ENCODE measurements at regions of chr5 and their contacts with region 1.

Region 1: GRCh38 chr5:40904205-40904993 is 4.9 kb upstream of the C7 start:
- DNase-seq: peak in 1 of 2 donors; percentile 63
- ATAC-seq: peak; percentile 90
- H3K4me3 ChIP-seq: no peak overlapping the region
- H3K27ac ChIP-seq: no peak overlapping the region
- H3K4me1 ChIP-seq: no peaks in the 10 kb centered on the region
- H3K27me3 ChIP-seq: no peaks in the 10 kb centered on the region

Region 2: DNA sequence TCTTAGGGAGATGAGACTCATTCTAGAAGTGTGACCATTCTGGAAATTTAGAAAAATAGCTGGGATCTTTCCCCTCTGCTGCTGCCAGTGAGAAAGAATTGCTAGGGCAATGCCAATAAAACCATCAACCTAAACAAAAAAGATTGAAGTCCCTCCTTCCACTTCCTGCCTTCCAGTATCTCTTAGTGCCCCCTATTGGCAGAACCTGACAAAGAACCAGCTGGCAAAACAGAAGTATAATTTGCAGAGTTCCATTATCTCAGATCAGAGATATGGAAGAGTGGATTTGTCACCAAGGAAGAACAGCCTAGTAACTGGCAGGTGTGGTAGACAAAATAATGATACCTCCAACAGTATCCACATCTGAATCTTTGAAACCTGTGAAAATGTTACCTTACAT is 619.8 kb after region 1 on chr5:
- intact Hi-C with region 1: loop called in 1 of 2 experiments (anchors 10 kb)
- DNase-seq: no peak
- ATAC-seq: no peak
- H3K4me3 ChIP-seq: no peak overlapping the region
- H3K27ac ChIP-seq: no peak overlapping the region
- H3K4me1 ChIP-seq: peaks cover 0 to 2% of the 10 kb centered on the region in 2 donors
- H3K27me3 ChIP-seq: no peaks in the 10 kb centered on the region

Region 3: DNA sequence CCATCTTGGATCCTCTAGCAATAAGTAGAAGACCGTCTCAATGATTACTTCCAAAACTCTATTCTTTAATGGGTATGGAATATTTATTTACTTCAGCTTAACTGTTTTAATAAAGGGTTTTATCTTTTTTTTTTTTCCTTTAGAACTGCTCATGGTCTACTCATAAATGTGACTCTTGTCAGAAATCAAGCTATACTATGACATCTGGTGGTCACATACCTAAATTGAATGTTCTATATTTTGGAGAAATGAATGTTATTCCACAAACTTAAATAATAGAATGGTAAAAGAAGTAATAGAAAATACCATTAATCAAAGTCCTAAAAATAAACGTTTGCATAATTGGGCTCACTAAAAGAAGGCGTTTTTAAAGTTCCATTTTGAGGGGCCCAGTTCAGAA is 737.2 kb after region 1 on chr5:
- intact Hi-C with region 1: loop called in 1 of 2 experiments (anchors 10 kb)
- DNase-seq: no peak
- ATAC-seq: no peak
- H3K4me3 ChIP-seq: no peak overlapping the region
- H3K27ac ChIP-seq: no peak overlapping the region
- H3K4me1 ChIP-seq: peaks cover 0 to 2% of the 10 kb centered on the region in 2 donors
- H3K27me3 ChIP-seq: no peaks in the 10 kb centered on the region

Region 4: DNA sequence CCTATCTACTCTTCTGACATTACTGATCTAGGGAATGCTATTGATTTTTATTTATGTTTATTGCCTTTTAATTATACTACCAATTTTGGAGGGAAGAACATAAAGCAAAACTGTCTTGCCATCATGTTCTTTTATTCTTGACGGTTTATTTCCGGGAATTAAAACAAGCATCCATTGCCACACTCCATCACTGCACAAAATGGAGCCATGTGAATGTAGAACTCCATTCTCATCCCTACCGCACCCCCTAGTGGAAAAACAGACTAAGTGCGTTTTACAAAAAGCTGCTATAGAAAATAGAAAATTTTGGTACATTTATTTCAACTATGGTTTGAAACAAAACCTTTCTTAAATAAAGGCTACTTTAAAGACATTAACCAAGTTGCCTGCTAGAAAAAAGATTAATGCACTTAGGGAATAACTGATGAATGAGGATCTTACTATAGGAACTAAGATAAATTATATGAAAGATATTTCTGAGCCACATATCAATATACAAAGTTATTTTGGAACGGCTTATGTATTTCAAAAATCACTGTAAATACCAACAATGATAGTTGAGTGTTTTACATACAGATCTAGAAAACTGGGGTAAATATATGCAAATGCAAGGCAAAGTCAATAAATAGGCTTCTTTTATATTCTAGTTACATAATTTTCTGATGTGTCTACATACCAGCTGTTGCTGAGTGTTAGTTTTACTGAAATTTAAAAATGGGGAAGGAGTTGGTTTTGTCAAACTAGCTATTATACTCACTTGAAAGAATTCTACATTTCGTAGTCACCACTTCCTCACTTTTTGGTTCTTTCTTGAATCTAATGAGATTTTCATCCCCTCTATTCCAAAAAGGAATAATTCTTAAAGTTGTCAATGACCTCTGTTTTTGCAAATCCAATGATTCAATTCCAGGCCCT is 939.3 kb after region 1 on chr5:
- intact Hi-C with region 1: loop called (anchors 5 kb)
- DNase-seq: no peak
- ATAC-seq: no peak
- H3K4me3 ChIP-seq: no peak overlapping the region
- H3K27ac ChIP-seq: no peak overlapping the region
- H3K4me1 ChIP-seq: peaks cover 0 to 2% of the 10 kb centered on the region in 2 donors
- H3K27me3 ChIP-seq: no peaks in the 10 kb centered on the region

Measured in aorta (tissue), 5 donors.